A673 (cell line): ENCODE measurements at regions of chr1 and their contacts with region 1.

Region 1: DNA sequence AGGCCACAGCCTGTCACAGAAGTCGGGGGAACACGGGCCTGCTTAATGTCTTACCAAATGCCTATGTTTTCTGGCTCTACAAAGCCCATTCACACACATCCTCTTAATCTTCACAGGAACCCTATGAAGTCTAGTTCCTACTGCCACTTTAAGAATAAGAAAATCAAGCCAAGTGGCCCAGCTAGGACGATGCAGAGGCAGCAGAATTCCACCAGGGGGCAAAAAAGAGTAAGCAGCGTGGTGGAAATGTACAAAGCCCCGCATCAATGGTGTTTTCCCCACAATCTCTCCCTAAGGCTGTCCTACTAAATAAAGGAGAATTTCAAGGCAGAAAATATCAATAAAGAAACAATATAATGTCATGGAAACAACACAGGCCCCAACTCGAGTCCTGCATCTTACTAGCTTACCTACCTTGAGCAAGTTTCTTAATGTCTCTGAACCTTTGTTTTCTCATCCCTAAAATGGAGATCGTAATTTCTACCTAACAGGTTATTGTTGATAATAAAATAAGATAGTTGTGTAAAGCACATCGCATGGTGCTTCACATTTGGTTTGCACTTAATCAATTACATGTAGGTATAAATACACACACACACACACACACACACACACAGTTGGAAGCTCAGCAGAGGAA is 21.4 kb downstream of the SEC16B start:
- DNase-seq: peak; percentile 93
- H3K4me3 ChIP-seq: no peak overlapping the region
- H3K27ac ChIP-seq: no peak overlapping the region
- H3K4me1 ChIP-seq: peaks cover 49% of the 10 kb centered on the region
- H3K27me3 ChIP-seq: no peaks in the 10 kb centered on the region
- CTCF ChIP-seq: peak; percentile 95

Region 2: DNA sequence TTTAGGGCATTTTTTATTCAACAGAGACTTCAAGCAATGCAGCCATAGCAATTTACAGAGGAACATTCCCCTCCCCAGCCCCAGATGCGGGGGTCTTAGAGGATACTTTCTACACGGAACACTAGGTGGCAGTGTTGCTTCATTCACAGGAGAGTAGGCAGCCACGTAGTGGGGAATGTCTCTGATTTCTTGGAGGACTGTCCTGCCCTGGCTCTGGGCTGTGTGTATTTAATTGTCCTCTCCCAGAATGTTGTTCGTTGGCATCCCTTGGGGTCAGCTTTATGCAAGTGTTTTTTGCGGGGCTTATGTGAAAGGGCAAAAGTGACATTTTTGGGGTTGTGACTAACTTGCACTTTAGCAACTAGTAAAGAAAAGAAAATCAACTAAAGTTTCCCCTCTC is 1388.6 kb before region 1 on chr1:
- CTCF ChIA-PET with region 1: interaction called, 3 read pairs
- POLR2A ChIA-PET with region 1: no interaction called
- intact Hi-C with region 1: loop called (anchors 5 kb)
- DNase-seq: peak; percentile 79
- H3K4me3 ChIP-seq: no peak overlapping the region
- H3K27ac ChIP-seq: no peak overlapping the region
- H3K4me1 ChIP-seq: no peaks in the 10 kb centered on the region
- H3K27me3 ChIP-seq: peaks cover 23% of the 10 kb centered on the region
- CTCF ChIP-seq: peak; percentile 89

Region 3: GRCh38 chr1:176897350-176898236 is 1050.9 kb before region 1 on chr1:
- CTCF ChIA-PET with region 1: interaction called, 6 read pairs
- POLR2A ChIA-PET with region 1: interaction called, 3 read pairs
- intact Hi-C with region 1: loop called (anchors 1 kb)
- DNase-seq: peak; percentile 82
- H3K4me3 ChIP-seq: peak overlapping the region; percentile 32
- H3K27ac ChIP-seq: no peak overlapping the region
- H3K4me1 ChIP-seq: peaks cover 36% of the 10 kb centered on the region
- H3K27me3 ChIP-seq: no peaks in the 10 kb centered on the region
- CTCF ChIP-seq: peak; percentile 96

Region 4: GRCh38 chr1:177181631-177182291 is 766.7 kb before region 1 on chr1:
- CTCF ChIA-PET with region 1: no interaction called
- POLR2A ChIA-PET with region 1: no interaction called
- intact Hi-C with region 1: loop called (anchors 5 kb)
- DNase-seq: peak; percentile 81
- H3K4me3 ChIP-seq: peak overlapping the region; percentile 38
- H3K27ac ChIP-seq: no peak overlapping the region
- H3K4me1 ChIP-seq: peaks cover 9% of the 10 kb centered on the region
- H3K27me3 ChIP-seq: peaks cover 6% of the 10 kb centered on the region
- CTCF ChIP-seq: peak; percentile 89

Region 5: GRCh38 chr1:177546346-177546745 is 402.1 kb before region 1 on chr1:
- CTCF ChIA-PET with region 1: no interaction called
- POLR2A ChIA-PET with region 1: no interaction called
- intact Hi-C with region 1: loop called (anchors 10 kb)
- DNase-seq: peak; percentile 19
- H3K4me3 ChIP-seq: no peak overlapping the region
- H3K27ac ChIP-seq: no peak overlapping the region
- H3K4me1 ChIP-seq: no peaks in the 10 kb centered on the region
- H3K27me3 ChIP-seq: no peaks in the 10 kb centered on the region
- CTCF ChIP-seq: no peak

Region 6: GRCh38 chr1:178189814-178190213 is 241.4 kb after region 1 on chr1:
- CTCF ChIA-PET with region 1: no interaction called
- POLR2A ChIA-PET with region 1: no interaction called
- intact Hi-C with region 1: loop called (anchors 2 kb)
- DNase-seq: peak; percentile 78
- H3K4me3 ChIP-seq: no peak overlapping the region
- H3K27ac ChIP-seq: no peak overlapping the region
- H3K4me1 ChIP-seq: no peaks in the 10 kb centered on the region
- H3K27me3 ChIP-seq: no peaks in the 10 kb centered on the region
- CTCF ChIP-seq: peak; percentile 74